CD4-positive, alpha-beta T cell (primary cell): ENCODE measurements at regions of chr2 and their contacts with region 1.

Region 1: DNA sequence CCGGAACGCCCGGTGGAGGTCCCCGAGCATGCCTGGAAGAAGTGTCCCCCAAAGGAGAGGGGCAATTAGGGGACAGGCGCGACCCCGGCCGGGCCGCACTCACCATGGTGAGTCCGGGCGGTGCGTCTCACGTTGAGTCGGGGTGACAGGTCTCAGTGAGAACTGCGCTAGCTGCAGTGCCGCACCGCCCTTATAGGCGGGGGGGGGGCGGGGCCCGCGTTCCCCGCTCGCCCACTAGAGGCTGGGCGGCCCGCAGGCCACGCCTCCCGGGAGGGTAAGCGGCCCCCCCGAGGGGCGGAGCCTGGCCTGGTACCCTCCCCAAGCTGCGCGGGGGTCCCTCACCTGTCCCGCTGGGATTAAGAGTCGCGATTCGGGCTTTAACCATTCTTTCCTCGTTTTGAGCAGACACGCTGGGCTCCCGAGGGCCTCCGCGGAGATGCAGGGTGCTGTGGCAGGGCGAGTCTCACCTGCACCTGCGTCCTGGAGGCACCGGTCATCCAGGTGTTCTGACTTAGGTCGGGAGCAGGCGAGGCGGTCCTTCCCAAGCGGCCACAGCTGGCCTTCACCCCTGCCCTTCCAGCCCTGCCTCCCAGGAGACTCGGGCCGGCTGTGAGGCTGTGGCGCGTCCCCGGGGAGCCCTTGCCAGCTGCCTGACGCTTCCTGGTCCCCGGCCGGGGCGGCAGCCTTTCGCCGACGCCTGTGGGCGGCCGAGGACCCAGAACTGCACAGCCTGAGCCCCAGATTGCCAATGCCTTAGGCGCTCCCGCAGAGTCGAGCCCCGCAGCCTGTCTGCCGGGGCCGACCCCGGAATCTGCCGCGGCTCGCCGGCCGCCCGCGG is at the start of gene TUBA4A:
- DNase-seq: peak; percentile 83 to 95 (median 90)
- ATAC-seq: peak; percentile 71
- H3K4me3 ChIP-seq: peak within 1 kb of the TSS; percentile 88
- H3K4me3 Mint-ChIP-seq: peak within 1 kb of the TSS; percentile 88
- H3K27ac ChIP-seq: peak within 1 kb of the TSS; percentile 73 to 87
- H3K27ac Mint-ChIP-seq: peak within 1 kb of the TSS; percentile 96
- H3K4me1 ChIP-seq: peaks cover 49% of the 10 kb centered on the region
- H3K4me1 Mint-ChIP-seq: peaks cover 49% of the 10 kb centered on the region
- H3K27me3 ChIP-seq: no peaks in the 10 kb centered on the region
- H3K27me3 Mint-ChIP-seq: no peaks in the 10 kb centered on the region
- CTCF ChIP-seq: no peak
- total RNA-seq, gene TUBA4A: 183 to 185 TPM

Region 2: GRCh38 chr2:218229239-218229638 is 1024.7 kb before region 1 on chr2:
- CTCF ChIA-PET with region 1: no interaction called
- POLR2A ChIA-PET with region 1: no interaction called
- intact Hi-C with region 1: no loop called
- DNase-seq: peak in 10 of 14 experiments; percentile 13 to 85 (median 36)
- ATAC-seq: peak; percentile 82
- H3K4me3 ChIP-seq: no peak overlapping the region
- H3K4me3 Mint-ChIP-seq: peak overlapping the region; percentile 71
- H3K27ac ChIP-seq: peak overlapping the region; percentile 51 to 60
- H3K27ac Mint-ChIP-seq: peak overlapping the region; percentile 91
- H3K4me1 ChIP-seq: peaks cover 70% of the 10 kb centered on the region
- H3K4me1 Mint-ChIP-seq: peaks cover 78% of the 10 kb centered on the region
- H3K27me3 ChIP-seq: no peaks in the 10 kb centered on the region
- H3K27me3 Mint-ChIP-seq: no peaks in the 10 kb centered on the region
- CTCF ChIP-seq: no peak

Region 3: GRCh38 chr2:219149667-219150066 is 104.3 kb before region 1 on chr2:
- CTCF ChIA-PET with region 1: no interaction called
- POLR2A ChIA-PET with region 1: no interaction called
- intact Hi-C with region 1: no loop called
- DNase-seq: no peak
- ATAC-seq: no peak
- H3K4me3 ChIP-seq: no peak overlapping the region
- H3K4me3 Mint-ChIP-seq: no peak overlapping the region
- H3K27ac ChIP-seq: no peak overlapping the region
- H3K27ac Mint-ChIP-seq: no peak overlapping the region
- H3K4me1 ChIP-seq: no peaks in the 10 kb centered on the region
- H3K4me1 Mint-ChIP-seq: no peaks in the 10 kb centered on the region
- H3K27me3 ChIP-seq: no peaks in the 10 kb centered on the region
- H3K27me3 Mint-ChIP-seq: no peaks in the 10 kb centered on the region
- CTCF ChIP-seq: no peak

Region 4: DNA sequence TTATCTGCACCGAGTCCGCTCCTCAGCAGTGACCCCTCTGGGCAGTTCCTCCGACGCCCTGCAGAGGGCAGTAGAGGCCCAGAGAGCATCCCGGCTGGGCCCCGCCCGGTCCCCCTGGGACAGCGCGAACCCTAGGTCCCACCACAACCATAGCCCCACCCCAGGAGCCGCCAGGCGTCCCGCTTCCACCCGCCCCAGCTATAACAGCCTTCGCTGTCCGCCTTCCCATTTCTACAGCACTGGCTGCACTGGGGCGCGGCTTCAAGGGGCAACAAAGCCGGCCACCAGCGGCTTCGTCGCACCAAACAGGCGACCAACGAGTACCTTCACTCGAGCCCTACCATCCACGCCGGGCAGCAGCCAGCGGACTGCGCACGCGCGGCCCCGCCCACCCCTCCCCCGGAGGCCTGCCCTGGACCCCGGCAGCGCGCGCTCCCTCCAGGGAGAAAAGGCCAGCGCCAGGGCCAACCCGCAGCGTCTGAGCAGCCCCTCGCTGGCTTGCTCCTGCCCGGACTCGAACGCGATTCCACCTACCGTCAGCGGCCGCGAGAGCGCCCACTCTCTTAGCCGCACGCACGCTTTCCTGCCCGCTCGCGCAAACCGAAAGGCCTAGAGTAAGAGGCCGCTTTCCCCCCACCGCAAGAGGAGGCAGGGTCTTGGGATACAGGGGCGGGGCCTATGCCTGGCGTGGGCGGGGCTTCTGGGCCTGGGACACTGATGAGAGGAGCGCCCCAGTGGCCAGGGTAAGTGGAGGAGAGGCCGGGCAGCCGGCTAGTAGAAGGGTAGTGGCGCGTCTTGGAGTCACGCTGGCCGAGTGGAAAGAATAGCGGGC is 93.6 kb before region 1 on chr2 and contains the start of gene NHEJ1:
- CTCF ChIA-PET with region 1: interaction called, 13 read pairs
- POLR2A ChIA-PET with region 1: interaction called, 4 read pairs
- intact Hi-C with region 1: no loop called
- DNase-seq: peak; percentile 82 to 97 (median 90)
- ATAC-seq: peak; percentile 90
- H3K4me3 ChIP-seq: peak within 1 kb of the TSS; percentile 78
- H3K4me3 Mint-ChIP-seq: peak within 1 kb of the TSS; percentile 94
- H3K27ac ChIP-seq: peak within 1 kb of the TSS; percentile 52 to 77
- H3K27ac Mint-ChIP-seq: peak within 1 kb of the TSS; percentile 94
- H3K4me1 ChIP-seq: peaks cover 17% of the 10 kb centered on the region
- H3K4me1 Mint-ChIP-seq: peaks cover 24% of the 10 kb centered on the region
- H3K27me3 ChIP-seq: no peaks in the 10 kb centered on the region
- H3K27me3 Mint-ChIP-seq: no peaks in the 10 kb centered on the region
- CTCF ChIP-seq: peak; percentile 97
- total RNA-seq, gene NHEJ1: 7.2 to 8.5 TPM

Region 5: GRCh38 chr2:219218732-219219701 is 35.0 kb before region 1 on chr2 and contains the start of gene ABCB6:
- CTCF ChIA-PET with region 1: interaction called, 6 read pairs
- POLR2A ChIA-PET with region 1: interaction called, 63 read pairs
- intact Hi-C with region 1: loop called (anchors 5 kb)
- DNase-seq: peak; percentile 67 to 93 (median 86)
- ATAC-seq: peak; percentile 92
- H3K4me3 ChIP-seq: peak within 1 kb of the TSS; percentile 70
- H3K4me3 Mint-ChIP-seq: peak within 1 kb of the TSS; percentile 85
- H3K27ac ChIP-seq: peak within 1 kb of the TSS in 1 of 2 donors; percentile 56
- H3K27ac Mint-ChIP-seq: peak within 1 kb of the TSS; percentile 78
- H3K4me1 ChIP-seq: peaks cover 26% of the 10 kb centered on the region
- H3K4me1 Mint-ChIP-seq: peaks cover 21% of the 10 kb centered on the region
- H3K27me3 ChIP-seq: no peaks in the 10 kb centered on the region
- H3K27me3 Mint-ChIP-seq: no peaks in the 10 kb centered on the region
- CTCF ChIP-seq: no peak
- total RNA-seq, gene ABCB6: 2.6 to 3.1 TPM

Region 6: GRCh38 chr2:219278655-219279516 is 24.9 kb after region 1 on chr2 and contains the start of gene DNAJB2:
- CTCF ChIA-PET with region 1: interaction called, 50 read pairs
- POLR2A ChIA-PET with region 1: interaction called, 202 read pairs
- intact Hi-C with region 1: loop called (anchors 1 kb)
- DNase-seq: peak; percentile 96 to 100 (median 98)
- ATAC-seq: peak; percentile 76
- H3K4me3 ChIP-seq: peak within 1 kb of the TSS; percentile 66
- H3K4me3 Mint-ChIP-seq: peak within 1 kb of the TSS; percentile 97
- H3K27ac ChIP-seq: peak within 1 kb of the TSS; percentile 95 to 97
- H3K27ac Mint-ChIP-seq: peak within 1 kb of the TSS; percentile 98
- H3K4me1 ChIP-seq: peaks cover 43% of the 10 kb centered on the region
- H3K4me1 Mint-ChIP-seq: peaks cover 43% of the 10 kb centered on the region
- H3K27me3 ChIP-seq: no peaks in the 10 kb centered on the region
- H3K27me3 Mint-ChIP-seq: no peaks in the 10 kb centered on the region
- CTCF ChIP-seq: no peak
- total RNA-seq, gene DNAJB2: 151 to 161 TPM